Gastrocnemius medialis (tissue), 4 donors: ENCODE measurements at regions of chr20 and their contacts with region 1.

Region 1: GRCh38 chr20:5749952-5750779 is at the start of gene SHLD1:
- DNase-seq: peak; percentile 73 to 83
- ATAC-seq: peak; percentile 96 to 97
- H3K4me3 ChIP-seq: peak within 1 kb of the TSS; percentile 64 to 77 (median 71)
- H3K27ac ChIP-seq: peak within 1 kb of the TSS; percentile 83 to 87 (median 84)
- H3K4me1 ChIP-seq: peaks cover 10 to 12% of the 10 kb centered on the region in 2 donors
- H3K27me3 ChIP-seq: no peaks in the 10 kb centered on the region
- CTCF ChIP-seq: no peak
- POLR2A ChIP-seq: no peak
- total RNA-seq, gene SHLD1: 5.4 to 7.1 (median 5.8) TPM

Region 2: DNA sequence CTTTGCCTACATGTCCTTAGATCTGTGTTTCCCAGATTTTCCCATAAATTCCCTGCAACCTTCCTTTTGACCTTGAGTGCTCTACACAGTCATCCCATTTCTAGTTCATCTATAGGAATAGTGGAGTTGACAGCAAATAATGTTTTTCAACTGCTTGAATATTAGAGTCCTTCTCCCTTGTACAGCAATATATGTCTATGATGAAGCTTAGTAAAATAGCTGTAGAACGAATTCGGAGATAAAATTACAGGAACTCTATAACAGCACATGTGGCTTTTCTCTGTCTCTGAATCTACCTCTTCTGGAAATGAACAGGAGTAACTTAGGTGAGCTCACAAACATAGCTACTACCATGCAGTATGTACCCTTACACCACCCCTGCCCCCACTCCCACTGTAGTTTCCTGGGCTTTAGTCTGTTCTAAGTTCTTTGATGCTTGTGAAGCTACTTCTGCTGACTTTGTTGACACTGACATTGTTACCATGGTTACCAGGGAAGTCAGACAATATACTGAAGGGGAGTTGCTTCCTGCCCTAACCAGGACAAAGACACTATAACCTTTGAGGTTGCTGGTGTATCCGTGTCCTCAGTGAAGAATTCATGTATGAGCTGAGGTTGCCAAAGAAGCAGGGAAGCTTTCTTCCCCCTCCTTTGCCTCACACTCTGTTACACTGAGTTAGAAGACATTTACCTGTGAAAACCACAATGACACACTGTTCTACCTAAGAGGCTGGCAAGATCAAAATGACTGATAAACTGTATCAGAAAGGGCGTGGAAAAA is 35.7 kb before region 1 on chr20:
- in situ Hi-C with region 1: no loop called
- intact Hi-C with region 1: loop called (anchors 5 kb)
- DNase-seq: no peak
- ATAC-seq: peak; percentile 19 to 25
- H3K4me3 ChIP-seq: no peak overlapping the region
- H3K27ac ChIP-seq: no peak overlapping the region
- H3K4me1 ChIP-seq: peaks cover 10 to 11% of the 10 kb centered on the region in 2 donors
- H3K27me3 ChIP-seq: no peaks in the 10 kb centered on the region
- CTCF ChIP-seq: no peak
- POLR2A ChIP-seq: no peak

Region 3: GRCh38 chr20:5859608-5860007 is 109.4 kb after region 1 on chr20:
- in situ Hi-C with region 1: no loop called
- intact Hi-C with region 1: no loop called
- DNase-seq: no peak
- ATAC-seq: no peak
- H3K4me3 ChIP-seq: no peak overlapping the region
- H3K27ac ChIP-seq: no peak overlapping the region
- H3K4me1 ChIP-seq: peaks cover 32 to 36% of the 10 kb centered on the region in 2 donors
- H3K27me3 ChIP-seq: no peaks in the 10 kb centered on the region
- CTCF ChIP-seq: no peak
- POLR2A ChIP-seq: no peak

Region 4: GRCh38 chr20:6169251-6169650 is 419.1 kb after region 1 on chr20:
- in situ Hi-C with region 1: no loop called
- intact Hi-C with region 1: no loop called
- DNase-seq: no peak
- ATAC-seq: no peak
- H3K4me3 ChIP-seq: no peak overlapping the region
- H3K27ac ChIP-seq: no peak overlapping the region
- H3K4me1 ChIP-seq: peaks cover 0 to 8% of the 10 kb centered on the region in 2 donors
- H3K27me3 ChIP-seq: no peaks in the 10 kb centered on the region
- CTCF ChIP-seq: no peak
- POLR2A ChIP-seq: no peak

Region 5: GRCh38 chr20:6333110-6333509 is 582.9 kb after region 1 on chr20:
- in situ Hi-C with region 1: no loop called
- intact Hi-C with region 1: no loop called
- DNase-seq: no peak
- ATAC-seq: no peak
- H3K4me3 ChIP-seq: no peak overlapping the region
- H3K27ac ChIP-seq: no peak overlapping the region
- H3K4me1 ChIP-seq: no peaks in the 10 kb centered on the region
- H3K27me3 ChIP-seq: no peaks in the 10 kb centered on the region
- CTCF ChIP-seq: no peak
- POLR2A ChIP-seq: no peak